Naive thymus-derived CD8-positive, alpha-beta T cell (primary cell): ENCODE measurements at regions of chr10 and their contacts with region 1.

Region 1: GRCh38 chr10:74244097-74244685 is 93.2 kb downstream of the ADK start:
- DNase-seq: peak in 4 of 10 donors; percentile 16 to 47 (median 44)
- ATAC-seq: no peak
- H3K4me3 Mint-ChIP-seq: no peak overlapping the region
- H3K27ac Mint-ChIP-seq: no peak overlapping the region
- H3K4me1 Mint-ChIP-seq: peaks cover 0 to 4% (median 2%) of the 10 kb centered on the region in 4 donors
- H3K27me3 Mint-ChIP-seq: no peaks in the 10 kb centered on the region

Region 2: DNA sequence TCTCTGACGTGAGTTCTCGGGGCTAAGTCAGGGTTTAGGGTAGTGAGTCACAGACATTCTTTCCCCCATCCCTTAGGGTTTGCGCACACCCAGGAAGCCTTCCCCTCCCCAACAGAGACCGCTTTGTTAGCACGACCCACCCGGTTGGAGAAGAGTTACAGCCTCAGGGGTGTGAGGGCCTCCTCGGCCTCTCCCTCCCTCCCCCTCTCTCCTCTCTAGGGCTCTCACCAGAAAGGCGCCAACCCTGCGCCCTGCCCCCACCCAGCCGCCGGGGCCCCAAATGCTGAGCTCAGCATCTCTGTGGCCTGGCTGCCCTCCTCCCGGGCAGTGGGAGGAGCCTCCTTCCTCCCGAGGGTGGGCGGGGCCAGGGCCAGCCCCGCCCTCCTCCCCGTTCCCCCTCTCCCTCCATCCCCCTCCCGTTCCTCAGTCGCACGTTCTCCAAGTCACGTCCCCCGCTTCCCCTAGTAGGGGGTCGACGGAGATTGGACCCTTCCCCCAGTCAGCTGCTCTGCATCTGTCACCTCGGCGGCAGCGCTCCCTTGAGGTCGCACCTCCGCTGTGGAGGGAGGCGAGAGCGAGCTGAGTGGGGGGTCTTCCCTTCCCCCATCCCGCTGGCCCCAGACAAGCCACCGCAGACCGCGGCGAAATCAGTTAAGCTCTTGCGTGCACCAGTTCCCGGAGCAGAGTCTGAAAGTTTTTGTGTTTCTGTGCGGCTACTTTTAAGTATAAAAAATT is 1983.4 kb before region 1 on chr10:
- POLR2A ChIA-PET with region 1: interaction called, 10 read pairs
- DNase-seq: peak; percentile 62 to 86 (median 72)
- ATAC-seq: peak; percentile 72 to 75
- H3K4me3 Mint-ChIP-seq: peak overlapping the region; percentile 82 to 94 (median 89)
- H3K27ac Mint-ChIP-seq: peak overlapping the region; percentile 87 to 99 (median 94)
- H3K4me1 Mint-ChIP-seq: peaks cover 37 to 76% (median 75%) of the 10 kb centered on the region in 4 donors
- H3K27me3 Mint-ChIP-seq: no peaks in the 10 kb centered on the region